Mammary epithelial cell (primary cell): ENCODE measurements at regions of chr5 and their contacts with region 1.

Region 1: DNA sequence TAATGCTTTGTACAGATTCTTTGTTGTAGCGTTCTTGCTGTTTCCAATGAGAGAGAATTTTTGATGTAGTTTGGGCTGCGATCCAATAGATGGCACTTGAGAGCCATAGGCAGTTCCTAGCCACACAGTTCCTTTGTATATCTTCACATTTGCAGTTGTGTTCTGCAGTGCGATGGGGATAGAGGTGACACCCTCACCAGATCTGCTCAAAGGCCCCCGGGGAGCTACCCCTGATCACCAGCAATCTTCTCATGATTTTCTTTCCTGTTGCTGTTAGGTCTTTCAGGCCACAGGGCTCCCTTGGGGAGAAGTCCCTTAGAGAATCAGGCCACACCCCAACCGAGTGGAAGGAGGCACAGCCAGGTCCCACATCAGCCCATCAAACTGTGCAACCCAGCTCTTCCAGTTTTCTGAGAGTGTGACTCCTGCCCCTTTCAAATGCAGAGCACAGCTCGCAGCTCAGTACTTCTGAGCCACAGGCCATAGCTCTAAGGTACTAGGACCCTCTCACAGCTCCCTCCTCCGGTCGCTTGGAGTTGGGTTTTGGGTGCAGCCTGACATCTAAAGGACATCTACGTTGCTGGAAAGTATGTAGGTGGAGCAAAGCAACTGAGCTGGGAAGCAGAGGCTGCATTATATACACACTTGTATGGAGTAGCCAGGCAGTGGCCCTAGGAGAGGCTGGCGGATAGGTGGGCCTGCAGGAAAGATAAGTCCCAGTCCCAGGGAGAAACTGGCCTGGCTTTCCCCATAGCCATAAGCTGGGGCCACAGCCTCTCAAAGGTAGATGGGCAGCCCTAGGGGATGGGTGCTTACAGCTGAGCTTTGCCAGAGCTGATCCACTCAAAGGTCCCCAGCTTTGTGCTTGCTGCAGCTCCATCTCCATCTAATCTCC is 353.5 kb downstream of the SLCO4C1 start:
- DNase-seq: peak; percentile 16
- H3K4me3 ChIP-seq: no peak overlapping the region
- H3K27ac ChIP-seq: no peak overlapping the region
- H3K4me1 ChIP-seq: no peaks in the 10 kb centered on the region
- H3K27me3 ChIP-seq: no peaks in the 10 kb centered on the region
- CTCF ChIP-seq: peak; percentile 53 to 88

Region 2: DNA sequence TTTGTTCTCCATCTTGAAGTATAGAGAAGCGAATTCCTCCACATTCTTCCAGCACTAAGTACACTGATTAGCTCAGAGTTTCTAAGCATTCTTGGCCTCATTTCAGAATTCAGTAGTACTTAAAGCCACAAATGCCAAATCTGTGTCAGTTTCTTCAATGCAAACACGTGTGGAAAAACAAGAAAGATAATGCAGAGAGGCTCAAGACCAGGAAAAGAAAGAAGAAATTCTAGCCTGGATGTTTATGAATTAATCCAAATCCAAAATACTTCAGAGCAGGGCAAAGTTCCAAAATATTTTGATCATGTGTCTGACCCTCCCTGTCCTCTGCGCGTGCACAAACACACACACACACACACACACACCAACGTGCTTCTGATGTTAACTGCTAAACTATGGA is 104.1 kb before region 1 on chr5:
- CTCF ChIA-PET with region 1: no interaction called
- dilution Hi-C with region 1: no loop called
- in situ Hi-C with region 1: no loop called
- intact Hi-C with region 1: no loop called
- DNase-seq: no peak
- H3K4me3 ChIP-seq: no peak overlapping the region
- H3K27ac ChIP-seq: no peak overlapping the region
- H3K4me1 ChIP-seq: no peaks in the 10 kb centered on the region
- H3K27me3 ChIP-seq: no peaks in the 10 kb centered on the region
- CTCF ChIP-seq: no peak

Region 3: GRCh38 chr5:101977729-101978345 is 35.3 kb after region 1 on chr5:
- CTCF ChIA-PET with region 1: no interaction called
- dilution Hi-C with region 1: no loop called
- in situ Hi-C with region 1: no loop called
- intact Hi-C with region 1: loop called (anchors 1 kb)
- DNase-seq: peak; percentile 11
- H3K4me3 ChIP-seq: no peak overlapping the region
- H3K27ac ChIP-seq: no peak overlapping the region
- H3K4me1 ChIP-seq: no peaks in the 10 kb centered on the region
- H3K27me3 ChIP-seq: no peaks in the 10 kb centered on the region
- CTCF ChIP-seq: peak; percentile 67 to 71

Region 4: DNA sequence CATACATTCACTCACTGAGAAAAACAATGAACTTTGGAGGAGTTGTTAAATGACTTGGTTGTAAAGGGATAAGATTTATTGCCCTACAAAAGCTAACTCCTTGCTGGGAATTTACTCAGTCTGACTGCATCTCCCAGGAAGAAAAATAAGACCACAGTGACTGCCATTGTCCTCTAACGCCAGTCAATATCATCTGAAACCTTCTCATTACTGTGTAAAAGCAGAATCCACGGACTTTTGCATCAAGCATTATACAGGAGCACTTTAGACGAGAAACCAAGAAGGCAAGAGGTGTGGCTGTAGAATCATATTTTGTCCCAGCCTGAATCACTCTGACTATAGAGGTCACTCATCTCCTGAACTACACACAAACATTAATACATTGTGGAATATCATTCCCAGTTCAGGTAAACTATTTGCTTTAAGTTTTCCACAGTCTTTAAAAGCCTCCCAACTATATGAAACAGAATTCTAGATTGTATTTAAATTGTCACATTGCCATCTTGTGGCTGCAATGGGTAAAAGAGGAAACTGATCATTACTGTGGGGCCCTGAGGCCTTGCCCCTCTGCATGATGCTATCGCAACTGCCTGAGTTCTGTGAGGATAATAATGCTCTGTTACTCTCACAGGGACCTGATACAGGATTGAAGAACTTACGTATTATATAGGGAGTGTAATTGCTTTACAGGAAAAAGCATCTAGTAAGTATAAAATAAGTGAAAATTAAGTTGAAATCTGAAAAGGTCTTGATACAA is 210.6 kb after region 1 on chr5:
- CTCF ChIA-PET with region 1: no interaction called
- dilution Hi-C with region 1: no loop called
- in situ Hi-C with region 1: no loop called
- intact Hi-C with region 1: loop called (anchors 1 kb)
- DNase-seq: peak; percentile 1
- H3K4me3 ChIP-seq: no peak overlapping the region
- H3K27ac ChIP-seq: no peak overlapping the region
- H3K4me1 ChIP-seq: no peaks in the 10 kb centered on the region
- H3K27me3 ChIP-seq: no peaks in the 10 kb centered on the region
- CTCF ChIP-seq: peak; percentile 28 to 51

Region 5: DNA sequence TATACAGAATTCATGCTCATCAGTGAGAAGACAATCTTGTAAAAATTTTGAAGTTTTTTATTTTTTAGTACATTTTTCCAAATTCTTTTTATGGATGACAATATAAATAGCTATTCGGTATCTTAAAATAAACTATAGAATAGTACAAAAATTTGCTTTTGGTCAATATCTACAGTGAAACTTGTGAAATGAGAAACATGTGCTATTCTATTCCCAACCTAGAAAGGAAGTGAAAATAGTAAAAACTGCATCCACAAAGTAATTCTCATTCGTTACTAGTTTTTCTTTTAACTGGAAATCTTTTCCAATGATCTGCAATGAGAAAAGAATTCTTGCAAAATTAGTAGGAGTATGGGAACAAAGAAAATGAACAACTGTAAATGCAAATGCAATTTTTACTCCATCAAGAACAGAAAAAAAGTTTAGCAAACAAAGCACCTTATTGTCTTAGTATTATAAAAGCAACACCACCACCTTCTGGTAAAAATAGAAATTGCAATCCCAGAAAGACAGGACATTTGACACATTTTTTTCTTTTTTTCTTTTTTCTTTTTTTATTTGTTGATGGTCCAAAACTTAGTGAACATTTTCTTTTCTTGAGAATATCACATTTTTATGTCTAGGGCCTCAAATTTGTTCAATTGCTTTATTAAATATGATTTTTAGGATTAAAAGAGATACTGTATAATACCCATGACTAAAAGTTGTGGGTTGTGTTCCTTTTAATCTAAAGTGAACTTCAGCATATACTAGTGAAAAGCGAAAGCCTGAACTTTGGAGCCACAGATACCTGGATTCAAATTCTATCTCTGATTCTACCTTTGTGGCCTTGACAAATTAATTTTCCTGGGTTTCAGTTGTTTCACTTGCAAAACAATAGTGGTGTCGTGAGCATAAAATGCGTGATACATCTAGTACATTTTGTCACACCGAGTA is 281.2 kb after region 1 on chr5:
- CTCF ChIA-PET with region 1: no interaction called
- dilution Hi-C with region 1: no loop called
- in situ Hi-C with region 1: no loop called
- intact Hi-C with region 1: loop called (anchors 2 kb)
- DNase-seq: peak; percentile 10
- H3K4me3 ChIP-seq: no peak overlapping the region
- H3K27ac ChIP-seq: no peak overlapping the region
- H3K4me1 ChIP-seq: no peaks in the 10 kb centered on the region
- H3K27me3 ChIP-seq: no peaks in the 10 kb centered on the region
- CTCF ChIP-seq: peak; percentile 60 to 71